IMR-90 (cell line): ENCODE measurements at regions of chr7 and their contacts with region 1.

Region 1: GRCh38 chr7:143988976-143989745 is 11.0 kb upstream of the OR6B1 start:
- DNase-seq: peak; percentile 41
- ATAC-seq: peak; percentile 86
- H3K4me3 ChIP-seq: no peak overlapping the region
- H3K27ac ChIP-seq: peak overlapping the region; percentile 18; the same call in 1 of the 2 replicates
- H3K4me1 ChIP-seq: peaks cover 2% of the 10 kb centered on the region; the same call in 1 of the 2 replicates
- H3K27me3 ChIP-seq: no peaks in the 10 kb centered on the region
- CTCF ChIP-seq: no peak
- POLR2A ChIP-seq: no peak
- RAD21 ChIP-seq: no peak

Region 2: DNA sequence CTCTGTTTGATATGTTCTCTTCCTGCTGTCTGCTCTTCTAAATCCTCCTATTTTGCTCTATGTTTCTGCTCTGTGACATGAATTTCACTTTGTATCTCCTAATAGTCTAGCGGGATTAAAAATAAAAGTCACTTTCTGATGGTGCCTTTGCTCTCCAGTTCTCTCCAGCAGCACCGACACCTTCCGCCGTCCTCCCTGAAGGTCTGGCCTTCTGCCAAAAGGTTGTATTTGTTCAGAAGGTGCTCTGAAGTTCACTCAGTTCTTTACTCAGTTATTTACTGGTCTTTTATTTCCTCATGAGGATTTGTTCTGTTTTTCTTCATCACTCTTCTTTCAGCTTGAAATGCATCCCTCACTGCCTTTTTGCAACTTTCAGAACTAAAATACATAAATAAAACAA is 569.3 kb before region 1 on chr7:
- CTCF ChIA-PET with region 1: no interaction called
- POLR2A ChIA-PET with region 1: no interaction called
- dilution Hi-C with region 1: no loop called
- in situ Hi-C with region 1: no loop called
- intact Hi-C with region 1: no loop called
- DNase-seq: no peak
- ATAC-seq: no peak
- H3K4me3 ChIP-seq: no peak overlapping the region
- H3K27ac ChIP-seq: no peak overlapping the region
- H3K4me1 ChIP-seq: peaks cover 4% of the 10 kb centered on the region
- H3K27me3 ChIP-seq: no peaks in the 10 kb centered on the region
- CTCF ChIP-seq: no peak
- POLR2A ChIP-seq: no peak
- RAD21 ChIP-seq: no peak

Region 3: GRCh38 chr7:143953421-143953820 is 35.7 kb before region 1 on chr7:
- CTCF ChIA-PET with region 1: no interaction called
- POLR2A ChIA-PET with region 1: no interaction called
- dilution Hi-C with region 1: no loop called
- in situ Hi-C with region 1: no loop called
- intact Hi-C with region 1: loop called (anchors 5 kb)
- DNase-seq: no peak
- ATAC-seq: peak; percentile 38; the same call in 1 of the 2 replicates
- H3K4me3 ChIP-seq: no peak overlapping the region
- H3K27ac ChIP-seq: no peak overlapping the region
- H3K4me1 ChIP-seq: peaks cover 2% of the 10 kb centered on the region
- H3K27me3 ChIP-seq: peaks cover 3% of the 10 kb centered on the region; the same call in 1 of the 2 replicates
- CTCF ChIP-seq: no peak
- POLR2A ChIP-seq: no peak
- RAD21 ChIP-seq: no peak